Naive thymus-derived CD4-positive, alpha-beta T cell (primary cell): ENCODE measurements at regions of chr10 and their contacts with region 1.

Region 1: GRCh38 chr10:16116404-16117304 is 256.3 kb upstream of the MINDY3 start:
- DNase-seq: no peak
- ATAC-seq: no peak
- H3K4me3 ChIP-seq: no peak overlapping the region
- H3K4me3 Mint-ChIP-seq: no peak overlapping the region
- H3K27ac ChIP-seq: no peak overlapping the region
- H3K27ac Mint-ChIP-seq: no peak overlapping the region
- H3K4me1 ChIP-seq: no peaks in the 10 kb centered on the region
- H3K4me1 Mint-ChIP-seq: no peaks in the 10 kb centered on the region
- H3K27me3 ChIP-seq: no peaks in the 10 kb centered on the region
- H3K27me3 Mint-ChIP-seq: peaks cover 0 to 4% (median 0%) of the 10 kb centered on the region in 5 donors

Region 2: GRCh38 chr10:15985690-15986089 is 131.0 kb before region 1 on chr10:
- CTCF ChIA-PET with region 1: no interaction called
- POLR2A ChIA-PET with region 1: no interaction called
- intact Hi-C with region 1: no loop called
- DNase-seq: no peak
- ATAC-seq: no peak
- H3K4me3 ChIP-seq: no peak overlapping the region
- H3K4me3 Mint-ChIP-seq: no peak overlapping the region
- H3K27ac ChIP-seq: no peak overlapping the region
- H3K27ac Mint-ChIP-seq: no peak overlapping the region
- H3K4me1 ChIP-seq: no peaks in the 10 kb centered on the region
- H3K4me1 Mint-ChIP-seq: no peaks in the 10 kb centered on the region
- H3K27me3 ChIP-seq: no peaks in the 10 kb centered on the region
- H3K27me3 Mint-ChIP-seq: peaks cover 0 to 4% (median 0%) of the 10 kb centered on the region in 5 donors

Region 3: GRCh38 chr10:16195178-16195769 is 78.6 kb after region 1 on chr10:
- CTCF ChIA-PET with region 1: no interaction called
- POLR2A ChIA-PET with region 1: no interaction called
- intact Hi-C with region 1: no loop called
- DNase-seq: no peak
- ATAC-seq: no peak
- H3K4me3 ChIP-seq: no peak overlapping the region
- H3K4me3 Mint-ChIP-seq: peak overlapping the region in 1 of 10 donors; percentile 9
- H3K27ac ChIP-seq: no peak overlapping the region
- H3K27ac Mint-ChIP-seq: no peak overlapping the region
- H3K4me1 ChIP-seq: peaks cover 0 to 6% of the 10 kb centered on the region in 2 donors
- H3K4me1 Mint-ChIP-seq: peaks cover 0 to 20% (median 0%) of the 10 kb centered on the region in 7 donors
- H3K27me3 ChIP-seq: no peaks in the 10 kb centered on the region
- H3K27me3 Mint-ChIP-seq: peaks cover 0 to 14% (median under 1%) of the 10 kb centered on the region in 5 donors

Region 4: GRCh38 chr10:16777473-16778370 is 661.1 kb after region 1 on chr10:
- CTCF ChIA-PET with region 1: no interaction called
- POLR2A ChIA-PET with region 1: no interaction called
- intact Hi-C with region 1: loop called (anchors 2 kb)
- DNase-seq: peak in 7 of 9 donors; percentile 26 to 64 (median 56)
- ATAC-seq: peak; percentile 77
- H3K4me3 ChIP-seq: no peak overlapping the region
- H3K4me3 Mint-ChIP-seq: peak overlapping the region in 4 of 10 donors; percentile 14 to 42 (median 21)
- H3K27ac ChIP-seq: no peak overlapping the region
- H3K27ac Mint-ChIP-seq: peak overlapping the region in 8 of 9 donors; percentile 57 to 89 (median 84)
- H3K4me1 ChIP-seq: peaks cover 0 to 11% of the 10 kb centered on the region in 2 donors
- H3K4me1 Mint-ChIP-seq: peaks cover 20 to 40% (median 32%) of the 10 kb centered on the region in 7 donors
- H3K27me3 ChIP-seq: no peaks in the 10 kb centered on the region
- H3K27me3 Mint-ChIP-seq: no peaks in the 10 kb centered on the region